ENCODE measurements at regions of chr2 and their contacts with region 1.

Region 1: GRCh38 chr2:64018923-64019718 is at the start of gene VPS54:
- DNase-seq: peak in 1 of 2 experiments; percentile 67
- H3K4me3 ChIP-seq: peak within 1 kb of the TSS; percentile 74
- H3K27ac ChIP-seq: peak within 1 kb of the TSS; percentile 60
- H3K4me1 ChIP-seq: peaks cover 33% of the 10 kb centered on the region
- H3K27me3 ChIP-seq: no peaks in the 10 kb centered on the region
- CTCF ChIP-seq: no peak
- total RNA-seq, gene VPS54: 16.7 and 20.7 TPM in 2 replicates

Region 2: GRCh38 chr2:63588385-63589147 is 430.6 kb before region 1 on chr2 and contains the starts of genes MDH1 and WDPCP:
- CTCF ChIA-PET with region 1: no interaction called
- POLR2A ChIA-PET with region 1: no interaction called
- intact Hi-C with region 1: loop called (anchors 10 kb)
- DNase-seq: peak; percentile 94 to 100
- H3K4me3 ChIP-seq: peak within 1 kb of the TSS; percentile 63
- H3K27ac ChIP-seq: peak within 1 kb of the TSS; percentile 72
- H3K4me1 ChIP-seq: peaks cover 23% of the 10 kb centered on the region
- H3K27me3 ChIP-seq: no peaks in the 10 kb centered on the region
- CTCF ChIP-seq: no peak
- total RNA-seq, gene MDH1: 157 and 162 TPM in 2 replicates
- total RNA-seq, gene WDPCP: 15.2 and 15.5 TPM in 2 replicates

Region 3: DNA sequence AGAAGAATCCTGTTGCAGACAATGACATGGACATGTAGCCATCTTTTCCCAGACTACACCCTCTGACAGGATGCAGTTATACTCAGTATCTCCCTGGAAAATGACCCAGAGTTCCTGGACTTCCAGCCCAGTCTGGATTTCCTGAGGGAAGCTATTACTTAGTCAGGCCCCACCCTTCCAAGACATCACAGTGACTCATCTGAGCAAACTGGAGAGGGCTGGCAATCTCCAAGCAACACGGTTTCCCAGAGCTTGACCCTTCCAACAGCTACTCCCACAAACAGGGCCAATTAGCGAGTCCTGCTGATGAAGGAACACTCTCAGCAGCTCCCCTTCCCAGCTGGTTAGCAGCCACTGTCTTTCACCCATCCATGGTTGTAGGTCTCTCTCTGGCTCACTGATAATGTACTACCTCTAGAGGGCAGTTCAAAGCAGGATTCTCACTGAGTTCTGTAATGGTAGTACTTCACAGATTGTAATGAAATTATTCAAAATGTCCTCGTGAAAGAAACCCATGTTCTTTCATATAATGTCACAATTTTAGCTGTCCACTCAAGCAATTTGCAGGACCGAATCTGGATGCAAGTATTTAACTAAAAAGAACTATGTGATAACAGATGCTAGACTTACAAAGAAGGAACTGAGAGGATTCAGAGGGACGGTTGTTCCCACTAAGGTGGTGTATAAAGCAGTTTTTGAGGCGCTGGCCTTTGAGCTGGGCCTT is 320.1 kb before region 1 on chr2:
- CTCF ChIA-PET with region 1: no interaction called
- POLR2A ChIA-PET with region 1: no interaction called
- intact Hi-C with region 1: loop called (anchors 10 kb)
- DNase-seq: peak; percentile 52 to 75
- H3K4me3 ChIP-seq: no peak overlapping the region
- H3K27ac ChIP-seq: peak overlapping the region; percentile 54
- H3K4me1 ChIP-seq: peaks cover 25% of the 10 kb centered on the region
- H3K27me3 ChIP-seq: no peaks in the 10 kb centered on the region
- CTCF ChIP-seq: peak; percentile 63

Region 4: GRCh38 chr2:64000630-64001381 is 18.3 kb before region 1 on chr2:
- CTCF ChIA-PET with region 1: no interaction called
- POLR2A ChIA-PET with region 1: interaction called, 3 read pairs
- intact Hi-C with region 1: loop called (anchors 1 kb)
- DNase-seq: no peak
- H3K4me3 ChIP-seq: no peak overlapping the region
- H3K27ac ChIP-seq: no peak overlapping the region
- H3K4me1 ChIP-seq: no peaks in the 10 kb centered on the region
- H3K27me3 ChIP-seq: no peaks in the 10 kb centered on the region
- CTCF ChIP-seq: no peak; the same call in 1 of the 2 replicates

Region 5: GRCh38 chr2:64092502-64092901 is 73.4 kb after region 1 on chr2:
- CTCF ChIA-PET with region 1: no interaction called
- POLR2A ChIA-PET with region 1: no interaction called
- intact Hi-C with region 1: no loop called
- DNase-seq: no peak
- H3K4me3 ChIP-seq: no peak overlapping the region
- H3K27ac ChIP-seq: no peak overlapping the region
- H3K4me1 ChIP-seq: no peaks in the 10 kb centered on the region
- H3K27me3 ChIP-seq: no peaks in the 10 kb centered on the region
- CTCF ChIP-seq: no peak